GM10248 (cell line): ENCODE measurements at regions of chr1 and their contacts with region 1.

Region 1: GRCh38 chr1:161738627-161739287 is 10.8 kb upstream of the DUSP12 start:
- DNase-seq: peak; percentile 45
- CTCF ChIP-seq: peak; percentile 72

Region 2: GRCh38 chr1:161486806-161487741 is 251.7 kb before region 1 on chr1:
- CTCF ChIA-PET with region 1: interaction called, 79 read pairs
- POLR2A ChIA-PET with region 1: no interaction called
- DNase-seq: peak; percentile 61
- CTCF ChIP-seq: peak; percentile 72

Region 3: GRCh38 chr1:161531986-161532643 is 206.6 kb before region 1 on chr1:
- CTCF ChIA-PET with region 1: interaction called, 14 read pairs
- POLR2A ChIA-PET with region 1: no interaction called
- DNase-seq: no peak
- CTCF ChIP-seq: no peak

Region 4: DNA sequence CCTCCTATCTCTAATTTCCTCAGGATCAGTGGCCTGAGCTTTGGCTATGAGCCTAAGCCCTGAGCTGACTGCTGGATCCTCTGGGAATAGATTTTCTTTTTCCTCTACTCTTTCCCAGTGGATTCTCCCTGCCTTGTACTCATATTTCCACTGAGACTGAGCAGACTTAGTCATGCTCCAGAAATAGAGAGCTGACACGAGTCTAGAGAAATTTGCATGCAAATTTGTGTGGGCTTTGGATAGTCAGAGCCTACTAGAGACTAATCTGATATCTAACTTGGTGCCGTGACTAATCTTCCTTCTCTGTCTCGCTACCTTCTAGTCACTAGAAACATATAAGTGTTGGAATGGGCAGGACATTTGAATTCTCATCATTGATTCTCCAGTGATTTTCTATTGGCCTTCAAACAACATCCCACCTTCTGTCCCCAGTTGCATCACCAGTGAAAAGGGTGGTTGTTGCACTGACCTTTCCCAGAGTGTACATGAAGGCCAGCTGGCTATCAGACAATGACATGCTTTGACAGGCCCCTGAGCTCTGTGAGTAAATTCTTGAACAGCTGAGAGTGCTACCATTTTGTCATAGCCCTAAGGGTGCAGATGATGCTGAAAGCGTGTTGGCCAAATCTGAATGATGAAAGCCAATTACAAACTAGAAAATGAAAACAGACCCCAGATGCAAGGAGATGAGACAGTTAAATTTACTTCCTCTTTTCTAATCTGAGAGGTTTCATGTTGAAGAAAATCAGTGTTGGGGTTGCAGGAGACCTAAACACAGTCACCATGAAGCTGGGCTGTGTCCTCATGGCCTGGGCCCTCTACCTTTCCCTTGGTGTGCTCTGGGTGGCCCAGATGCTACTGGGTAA is 32.0 kb before region 1 on chr1 and contains the start of gene FCRLA:
- CTCF ChIA-PET with region 1: interaction called, 22 read pairs
- POLR2A ChIA-PET with region 1: no interaction called
- DNase-seq: peak; percentile 65
- CTCF ChIP-seq: no peak

Region 5: DNA sequence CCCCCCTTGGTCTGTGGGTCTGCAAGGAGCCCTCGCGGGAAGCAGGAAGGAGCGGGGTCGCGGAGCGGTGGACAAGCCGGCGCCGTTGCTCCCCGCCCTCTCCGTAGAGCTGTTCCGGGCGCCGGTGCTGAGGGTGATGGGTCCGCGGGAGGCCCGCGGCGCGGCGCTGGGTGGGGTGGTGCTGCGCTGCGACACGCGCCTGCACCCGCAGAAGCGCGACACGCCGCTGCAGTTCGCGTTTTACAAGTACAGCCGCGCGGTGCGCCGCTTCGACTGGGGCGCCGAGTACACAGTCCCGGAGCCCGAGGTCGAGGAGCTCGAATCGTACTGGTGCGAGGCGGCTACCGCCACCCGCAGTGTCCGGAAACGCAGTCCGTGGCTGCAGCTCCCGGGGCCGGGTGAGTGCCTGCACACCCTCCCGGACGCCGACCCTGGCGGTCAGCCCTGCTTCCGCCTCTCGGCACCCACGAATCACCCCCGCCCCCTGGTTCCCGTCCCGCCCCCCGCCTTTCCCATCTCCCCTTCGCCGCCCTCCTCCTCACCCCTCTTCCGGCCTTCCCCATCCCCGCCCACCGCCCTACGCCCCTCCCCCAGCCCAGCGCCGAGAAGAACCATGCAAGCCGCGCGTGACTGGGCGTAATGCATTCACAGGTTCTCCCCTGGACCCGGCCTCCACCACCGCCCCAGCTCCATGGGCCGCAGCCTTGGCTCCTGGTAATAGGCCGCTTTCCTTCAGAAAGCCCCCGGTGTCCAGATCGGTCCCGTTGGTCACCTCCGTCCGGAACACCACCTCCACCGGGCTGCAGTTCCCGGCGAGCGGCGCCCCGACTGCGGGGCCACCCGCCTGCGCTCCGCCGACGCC is 11.9 kb before region 1 on chr1:
- CTCF ChIA-PET with region 1: interaction called, 55 read pairs
- POLR2A ChIA-PET with region 1: interaction called, 3 read pairs
- DNase-seq: peak; percentile 89
- CTCF ChIP-seq: no peak

Region 6: DNA sequence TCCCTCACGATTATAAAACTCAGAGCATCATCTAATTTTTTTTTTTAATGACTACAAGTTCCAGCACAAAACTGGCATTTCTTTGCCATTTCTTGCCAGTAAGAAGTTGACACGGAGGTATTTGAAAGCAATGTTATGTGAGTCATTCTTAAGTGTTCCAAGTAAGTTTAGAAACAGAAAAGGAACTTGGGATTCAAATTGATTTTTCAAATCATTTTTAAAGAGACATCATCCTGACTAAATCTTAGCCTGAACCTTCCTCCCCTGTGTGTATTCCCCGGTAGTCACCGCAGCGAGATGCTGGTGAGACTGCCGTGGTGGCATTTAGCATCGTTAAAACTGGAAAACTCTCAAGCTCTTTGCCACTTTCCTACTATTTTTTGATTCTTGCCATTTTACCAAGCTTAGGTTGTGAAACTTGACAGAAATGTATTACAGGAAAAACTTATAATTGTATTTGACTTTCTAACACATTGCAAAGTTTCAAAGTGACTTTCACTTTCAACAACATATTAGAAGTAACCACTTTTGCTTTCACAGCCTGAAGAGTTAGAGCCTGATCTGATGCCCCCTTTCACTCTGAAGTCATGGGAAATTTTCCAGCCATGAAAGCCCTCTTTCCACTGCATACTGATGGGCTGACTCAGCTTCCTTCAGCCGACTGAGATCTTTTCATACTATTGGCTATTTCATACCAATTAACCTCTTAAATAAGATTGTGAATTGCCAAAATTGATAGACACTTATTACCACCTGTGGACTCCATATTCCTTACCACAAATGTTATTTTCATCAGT is 223.5 kb after region 1 on chr1:
- CTCF ChIA-PET with region 1: no interaction called
- POLR2A ChIA-PET with region 1: no interaction called
- DNase-seq: peak; percentile 65
- CTCF ChIP-seq: no peak

Region 7: DNA sequence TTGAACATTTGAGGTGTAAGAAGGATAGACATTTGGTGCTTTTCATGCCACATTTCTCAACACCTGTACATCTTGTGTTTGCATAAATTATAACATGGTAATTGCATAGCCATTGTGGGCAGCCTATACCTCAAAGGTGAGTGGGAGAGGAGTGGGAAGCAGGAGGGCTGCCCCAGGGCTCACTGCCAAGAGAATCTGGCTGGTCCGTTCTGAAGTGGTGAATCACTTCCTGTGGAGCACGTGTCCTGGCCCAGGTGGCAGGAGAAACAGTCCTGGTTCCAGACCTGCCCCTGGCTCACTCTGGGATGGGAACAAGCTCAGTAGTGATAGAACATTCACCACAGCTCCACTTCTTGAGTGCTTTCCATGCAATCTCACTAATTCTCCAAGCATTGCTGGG is 296.5 kb after region 1 on chr1:
- CTCF ChIA-PET with region 1: interaction called, 12 read pairs
- POLR2A ChIA-PET with region 1: no interaction called
- DNase-seq: no peak
- CTCF ChIP-seq: no peak